PC-9 (cell line): ENCODE measurements at regions of chr1 and their contacts with region 1.

Region 1: DNA sequence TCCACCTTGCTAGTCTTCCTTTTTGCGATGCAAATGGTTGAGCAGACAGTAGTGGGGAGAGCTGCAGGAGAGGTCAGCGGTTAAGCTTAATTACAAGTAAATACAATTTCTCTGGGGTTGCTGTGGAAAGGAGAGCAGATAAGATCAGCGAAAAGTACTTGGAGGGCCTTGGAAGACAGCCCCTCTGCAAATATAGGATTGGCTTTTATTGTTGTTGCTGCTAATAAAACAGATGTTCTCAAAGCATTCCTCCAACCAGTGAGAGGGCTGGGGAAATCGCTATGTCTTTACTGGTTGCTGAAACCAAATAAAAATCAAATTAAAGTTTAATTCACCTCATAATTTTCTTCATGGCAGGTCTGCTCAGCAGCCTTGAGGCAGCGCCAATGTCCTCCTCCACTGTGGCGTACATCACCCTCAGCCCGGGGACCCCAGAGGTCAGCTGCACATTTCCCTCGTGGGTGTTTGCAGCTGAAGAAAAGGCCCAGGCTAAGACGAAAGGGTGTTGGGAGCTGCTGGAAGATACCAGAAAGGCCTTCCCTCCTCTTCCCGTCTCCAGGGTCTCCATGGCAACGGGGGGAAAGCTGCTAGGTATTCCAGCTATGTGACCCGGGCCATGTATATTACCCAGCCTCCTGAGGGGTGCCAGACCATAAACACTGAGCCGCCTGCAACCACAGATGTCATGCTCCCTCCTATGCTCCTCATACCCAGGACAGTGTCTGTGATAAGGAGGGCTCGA is 54.6 kb upstream of the POU2F1 start:
- DNase-seq: no peak
- H3K4me3 ChIP-seq: no peak overlapping the region
- H3K27ac ChIP-seq: no peak overlapping the region
- H3K4me1 ChIP-seq: peaks cover 51% of the 10 kb centered on the region
- H3K27me3 ChIP-seq: no peaks in the 10 kb centered on the region
- CTCF ChIP-seq: no peak

Region 2: DNA sequence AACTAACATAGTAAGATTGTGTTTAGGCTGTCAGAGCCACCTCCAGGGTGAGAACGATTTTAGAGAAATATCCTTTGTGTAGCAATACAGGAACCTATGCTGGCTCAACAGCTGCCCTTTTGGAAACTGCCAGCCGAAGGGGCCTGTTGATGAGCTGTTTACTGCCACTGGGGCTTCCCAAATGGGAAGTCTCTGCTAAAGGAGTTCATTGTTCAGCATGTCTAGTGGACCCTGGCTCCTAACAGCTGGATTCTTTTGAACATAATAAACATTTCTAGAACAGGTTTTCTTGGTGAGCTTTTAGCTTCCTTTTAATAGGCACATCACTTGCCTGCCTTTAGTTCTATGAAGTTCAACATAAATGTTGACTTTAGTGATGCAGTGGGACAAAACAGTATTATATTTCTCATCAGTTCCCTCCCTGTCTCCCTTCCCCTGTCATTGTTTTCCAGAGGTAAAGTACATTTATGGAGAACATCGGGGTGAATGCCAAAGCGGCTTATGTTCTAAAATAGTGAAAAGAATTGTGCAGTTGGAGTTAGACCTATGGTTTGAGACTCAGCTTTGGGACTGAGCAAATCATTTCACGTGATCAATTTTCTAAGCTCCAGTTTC is 1281.3 kb before region 1 on chr1:
- CTCF ChIA-PET with region 1: no interaction called
- POLR2A ChIA-PET with region 1: interaction called, 11 read pairs
- intact Hi-C with region 1: no loop called
- DNase-seq: no peak
- H3K4me3 ChIP-seq: no peak overlapping the region
- H3K27ac ChIP-seq: 0 out of 2 replicates have a peak overlapping the region, but pooled peaks have one; percentile 9
- H3K4me1 ChIP-seq: peaks cover 28% of the 10 kb centered on the region
- H3K27me3 ChIP-seq: no peaks in the 10 kb centered on the region
- CTCF ChIP-seq: no peak

Region 3: DNA sequence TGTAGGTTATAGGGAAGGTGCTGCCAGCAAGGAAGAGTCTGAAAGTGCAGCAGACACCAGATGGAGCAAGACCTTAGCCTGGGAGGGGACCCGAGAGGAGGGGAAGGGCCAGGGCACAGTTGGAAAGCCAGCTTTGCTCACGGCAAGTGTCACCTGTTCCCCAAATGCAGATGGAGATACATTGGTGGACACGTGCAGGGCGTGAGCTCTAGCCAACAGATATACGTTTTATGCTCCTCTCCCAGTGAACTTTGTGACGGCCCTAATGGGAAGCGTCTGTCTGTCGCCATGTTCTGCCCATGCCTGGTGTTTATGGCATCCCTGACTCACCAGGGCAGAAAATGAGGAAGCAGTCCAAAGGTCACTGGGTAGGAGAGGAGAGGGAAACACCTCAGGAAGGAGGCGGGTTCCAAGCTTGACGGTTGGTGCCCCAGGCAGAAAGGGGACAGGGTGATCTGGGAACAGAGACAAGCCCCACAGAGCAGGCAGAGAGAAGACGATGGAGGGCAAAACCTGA is 83.5 kb before region 1 on chr1:
- CTCF ChIA-PET with region 1: interaction called, 4 read pairs
- POLR2A ChIA-PET with region 1: no interaction called
- intact Hi-C with region 1: loop called (anchors 5 kb)
- DNase-seq: peak; percentile 70 to 93
- H3K4me3 ChIP-seq: peak overlapping the region; percentile 27; the same call in 1 of the 2 replicates
- H3K27ac ChIP-seq: peak overlapping the region; percentile 87
- H3K4me1 ChIP-seq: peaks cover 40% of the 10 kb centered on the region
- H3K27me3 ChIP-seq: no peaks in the 10 kb centered on the region
- CTCF ChIP-seq: no peak

Region 4: GRCh38 chr1:167105271-167106118 is 60.6 kb before region 1 on chr1:
- CTCF ChIA-PET with region 1: no interaction called
- POLR2A ChIA-PET with region 1: interaction called, 14 read pairs
- intact Hi-C with region 1: no loop called
- DNase-seq: peak in 1 of 2 experiments; percentile 68
- H3K4me3 ChIP-seq: no peak overlapping the region
- H3K27ac ChIP-seq: 0 out of 2 replicates have a peak overlapping the region, but pooled peaks have one; percentile 2
- H3K4me1 ChIP-seq: peaks cover 75% of the 10 kb centered on the region
- H3K27me3 ChIP-seq: no peaks in the 10 kb centered on the region
- CTCF ChIP-seq: no peak

Region 5: DNA sequence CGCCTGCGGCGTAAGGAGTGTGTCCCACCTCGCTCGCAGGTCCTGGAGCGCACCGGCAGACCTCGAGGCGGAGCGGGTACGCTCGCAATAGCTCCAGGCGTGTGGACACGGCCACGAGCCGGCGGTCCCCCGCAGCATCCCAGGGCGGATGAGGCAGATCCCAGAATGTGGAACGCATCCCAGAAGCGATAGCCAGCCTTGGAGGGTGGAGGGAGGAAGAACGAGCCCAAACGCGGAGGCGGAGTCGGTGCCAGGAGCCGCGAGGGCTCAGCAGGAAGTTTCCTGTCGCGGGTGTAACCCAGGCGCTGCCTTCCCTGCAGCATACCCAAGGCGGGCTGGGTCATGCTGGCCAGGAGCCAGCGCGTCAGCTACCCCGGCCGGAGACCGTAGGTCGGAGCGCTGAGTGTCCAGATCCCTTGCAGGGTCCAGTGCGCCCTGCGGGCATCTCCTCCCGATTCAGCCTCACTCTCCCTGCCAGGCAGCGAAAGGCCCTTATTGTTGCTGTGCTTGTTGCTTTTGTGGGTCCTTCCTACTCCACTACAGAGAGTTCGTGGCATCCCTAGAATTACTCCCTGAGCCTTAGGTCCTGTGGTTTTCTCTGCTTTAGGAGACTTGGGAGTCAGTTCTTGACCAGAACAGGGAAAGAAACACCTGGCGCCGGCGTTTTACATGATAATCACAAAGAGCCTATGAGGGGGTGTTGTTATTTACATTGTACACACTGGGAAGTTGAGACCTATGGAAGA is 44.6 kb before region 1 on chr1:
- CTCF ChIA-PET with region 1: no interaction called
- POLR2A ChIA-PET with region 1: no interaction called
- intact Hi-C with region 1: loop called (anchors 5 kb)
- DNase-seq: peak; percentile 76 to 88
- H3K4me3 ChIP-seq: peak overlapping the region; percentile 91
- H3K27ac ChIP-seq: peak overlapping the region; percentile 59
- H3K4me1 ChIP-seq: peaks cover 18% of the 10 kb centered on the region; the same call in 1 of the 2 replicates
- H3K27me3 ChIP-seq: no peaks in the 10 kb centered on the region
- CTCF ChIP-seq: no peak

Region 6: DNA sequence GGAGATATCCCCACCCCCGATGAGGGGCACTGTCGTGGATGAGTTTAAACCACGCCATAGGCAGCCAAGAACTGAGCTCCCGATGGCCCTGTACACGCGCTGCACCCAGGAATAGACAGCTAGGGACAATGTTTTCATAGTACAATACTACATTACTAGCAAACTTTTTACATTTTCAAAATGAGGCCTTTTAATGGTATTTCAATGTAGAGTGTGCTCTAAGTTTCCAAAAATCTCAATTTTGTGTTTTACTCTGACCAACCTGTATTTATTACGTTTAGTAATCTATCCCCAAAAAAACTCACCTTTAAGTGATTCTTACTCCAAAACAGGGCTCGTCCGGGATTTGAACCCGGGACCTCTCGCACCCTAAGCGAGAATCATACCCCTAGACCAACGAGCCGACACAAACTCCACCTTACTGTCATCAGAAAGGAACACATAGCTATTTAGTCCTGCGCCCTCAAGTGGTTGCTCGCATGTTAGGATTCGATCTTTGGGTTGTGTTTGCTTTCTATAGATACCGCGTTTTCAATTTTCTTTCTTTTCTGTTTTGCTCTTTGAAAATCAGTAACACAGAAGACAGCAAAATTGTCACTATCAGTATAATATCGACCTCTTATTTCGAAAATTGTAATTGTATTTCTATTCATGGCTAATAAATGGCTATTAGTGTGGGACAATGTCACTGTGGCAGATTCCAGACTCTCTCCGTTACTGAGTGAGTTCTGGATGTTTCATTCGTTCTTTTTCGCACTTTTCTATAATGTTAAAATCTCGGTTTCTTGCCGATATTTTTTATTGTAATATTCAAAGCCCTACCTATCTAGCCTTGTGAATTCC is 549.3 kb after region 1 on chr1:
- CTCF ChIA-PET with region 1: interaction called, 10 read pairs
- POLR2A ChIA-PET with region 1: no interaction called
- intact Hi-C with region 1: no loop called
- DNase-seq: peak; percentile 81 to 85
- H3K4me3 ChIP-seq: peak overlapping the region; percentile 97
- H3K27ac ChIP-seq: peak overlapping the region; percentile 83
- H3K4me1 ChIP-seq: peaks cover 7% of the 10 kb centered on the region; the same call in 1 of the 2 replicates
- H3K27me3 ChIP-seq: no peaks in the 10 kb centered on the region
- CTCF ChIP-seq: peak; percentile 72